Dendritic cell treated with granulocyte-macrophage colony-stimulating factor and Interleukin-4, amounts not matched to agents 40 ng/mL and 50 ng/mL, for 4 days (primary cell): ENCODE measurements at regions of chr12 and their contacts with region 1.

Region 1: GRCh38 chr12:40224439-40225291 is at the start of gene LRRK2:
- H3K4me3 Mint-ChIP-seq: peak within 1 kb of the TSS; percentile 81
- H3K27ac Mint-ChIP-seq: peak within 1 kb of the TSS; percentile 87
- H3K4me1 Mint-ChIP-seq: peaks cover 55% of the 10 kb centered on the region
- H3K27me3 Mint-ChIP-seq: no peaks in the 10 kb centered on the region

Region 2: DNA sequence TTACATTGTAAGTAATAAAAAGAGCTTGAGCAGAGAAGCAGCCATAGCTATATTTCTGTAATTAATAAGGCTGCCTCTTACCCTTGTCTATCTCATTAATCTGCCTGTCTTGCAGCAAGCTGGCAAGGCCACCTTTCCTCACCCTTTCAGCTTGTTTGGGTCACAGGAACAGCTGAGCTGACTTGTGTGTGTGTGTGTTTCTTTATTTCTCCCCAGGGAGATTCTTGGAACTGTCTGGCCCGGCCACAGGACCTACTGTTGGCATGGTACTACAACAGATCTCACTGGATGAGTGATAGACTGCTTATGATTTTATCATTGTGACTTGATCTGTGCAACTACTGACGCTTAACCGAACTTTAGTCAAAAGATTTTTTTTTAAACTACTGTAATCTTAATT is 332.5 kb before region 1 on chr12:
- intact Hi-C with region 1: no loop called
- H3K4me3 Mint-ChIP-seq: no peak overlapping the region
- H3K27ac Mint-ChIP-seq: no peak overlapping the region
- H3K4me1 Mint-ChIP-seq: no peaks in the 10 kb centered on the region
- H3K27me3 Mint-ChIP-seq: no peaks in the 10 kb centered on the region

Region 3: GRCh38 chr12:40158592-40159111 is 66.0 kb before region 1 on chr12:
- intact Hi-C with region 1: loop called (anchors 2 kb)
- H3K4me3 Mint-ChIP-seq: no peak overlapping the region
- H3K27ac Mint-ChIP-seq: peak overlapping the region; percentile 86
- H3K4me1 Mint-ChIP-seq: peaks cover 42% of the 10 kb centered on the region
- H3K27me3 Mint-ChIP-seq: peaks cover 20% of the 10 kb centered on the region